Activated CD4-positive, alpha-beta T cell treated with anti-CD3 and anti-CD28 coated beads for 36 hours (primary cell): ENCODE measurements at regions of chr6 and their contacts with region 1.

Region 1: GRCh38 chr6:132768051-132768517 is 10.4 kb upstream of the VNN2 start:
- DNase-seq: peak; percentile 54
- ATAC-seq: peak; percentile 67
- H3K4me3 Mint-ChIP-seq: no peak overlapping the region
- H3K27ac Mint-ChIP-seq: no peak overlapping the region
- H3K4me1 Mint-ChIP-seq: peaks cover 20% of the 10 kb centered on the region
- H3K27me3 Mint-ChIP-seq: no peaks in the 10 kb centered on the region

Region 2: GRCh38 chr6:132512638-132513632 is 255.1 kb before region 1 on chr6 and contains the start of gene STX7:
- CTCF ChIA-PET with region 1: interaction called, 4 read pairs
- POLR2A ChIA-PET with region 1: no interaction called
- intact Hi-C with region 1: loop called in 1 of 2 experiments (anchors 10 kb)
- DNase-seq: peak; percentile 90
- ATAC-seq: peak; percentile 97
- H3K4me3 Mint-ChIP-seq: peak within 1 kb of the TSS; percentile 88
- H3K27ac Mint-ChIP-seq: peak within 1 kb of the TSS; percentile 85
- H3K4me1 Mint-ChIP-seq: peaks cover 30% of the 10 kb centered on the region
- H3K27me3 Mint-ChIP-seq: no peaks in the 10 kb centered on the region
- total RNA-seq, gene STX7: 13.3 to 20.3 TPM

Region 3: DNA sequence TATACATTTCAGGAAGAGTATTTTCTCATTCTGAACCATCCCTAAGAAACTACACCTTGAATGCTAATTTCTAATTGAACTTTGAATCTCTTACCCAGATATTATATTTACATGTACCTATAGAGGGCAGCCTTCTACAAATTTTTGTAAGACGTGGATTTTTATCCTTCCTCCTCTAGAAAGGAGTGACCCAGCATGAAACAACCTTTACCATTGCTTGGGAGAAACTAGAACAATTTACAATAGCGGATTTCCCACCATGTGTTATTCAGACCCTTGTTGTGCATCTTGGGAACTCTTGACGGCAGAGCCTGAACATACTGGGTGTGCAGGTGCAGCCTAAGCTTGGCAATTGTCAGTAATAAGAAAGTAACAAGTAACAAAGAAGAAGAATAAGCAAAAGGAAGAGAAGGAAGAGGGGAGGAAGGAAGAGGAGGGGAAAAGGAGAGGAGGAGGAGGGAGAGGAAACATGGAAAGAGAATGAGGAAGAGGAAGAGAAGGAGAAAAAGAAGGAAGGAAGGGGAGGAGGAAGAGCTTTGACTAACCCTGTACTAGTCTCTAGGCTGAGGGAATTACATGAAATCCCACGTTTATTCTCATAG is 98.3 kb before region 1 on chr6:
- CTCF ChIA-PET with region 1: interaction called, 43 read pairs
- POLR2A ChIA-PET with region 1: no interaction called
- intact Hi-C with region 1: loop called (anchors 1 kb)
- DNase-seq: no peak
- ATAC-seq: peak; percentile 64
- H3K4me3 Mint-ChIP-seq: no peak overlapping the region
- H3K27ac Mint-ChIP-seq: no peak overlapping the region
- H3K4me1 Mint-ChIP-seq: peaks cover 3% of the 10 kb centered on the region
- H3K27me3 Mint-ChIP-seq: peaks cover 3% of the 10 kb centered on the region

Region 4: DNA sequence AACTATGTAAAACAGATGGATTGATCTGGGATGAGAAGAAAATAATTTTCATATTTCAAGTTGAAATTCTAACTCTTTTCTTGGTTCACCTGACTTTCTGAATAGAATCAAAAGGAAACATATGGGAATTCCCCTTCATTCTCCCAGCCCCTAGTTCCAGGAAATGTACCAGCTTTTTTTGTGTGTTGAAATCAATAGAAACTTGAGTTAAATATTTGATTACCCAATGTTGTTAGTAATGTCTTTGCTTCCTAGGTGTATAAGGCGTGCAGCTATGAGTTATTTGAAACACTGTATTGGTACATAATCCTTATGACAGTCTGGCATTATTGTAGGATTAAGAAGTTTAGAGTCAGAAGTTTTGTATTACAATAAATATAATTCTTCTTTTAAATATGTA is 31.8 kb before region 1 on chr6:
- CTCF ChIA-PET with region 1: no interaction called
- POLR2A ChIA-PET with region 1: no interaction called
- intact Hi-C with region 1: loop called in 1 of 2 experiments (anchors 2 kb)
- DNase-seq: no peak
- ATAC-seq: peak; percentile 76
- H3K4me3 Mint-ChIP-seq: no peak overlapping the region
- H3K27ac Mint-ChIP-seq: no peak overlapping the region
- H3K4me1 Mint-ChIP-seq: peaks cover 23% of the 10 kb centered on the region
- H3K27me3 Mint-ChIP-seq: no peaks in the 10 kb centered on the region